ENCODE measurements at regions of chr3 and their contacts with region 1.

Region 1: DNA sequence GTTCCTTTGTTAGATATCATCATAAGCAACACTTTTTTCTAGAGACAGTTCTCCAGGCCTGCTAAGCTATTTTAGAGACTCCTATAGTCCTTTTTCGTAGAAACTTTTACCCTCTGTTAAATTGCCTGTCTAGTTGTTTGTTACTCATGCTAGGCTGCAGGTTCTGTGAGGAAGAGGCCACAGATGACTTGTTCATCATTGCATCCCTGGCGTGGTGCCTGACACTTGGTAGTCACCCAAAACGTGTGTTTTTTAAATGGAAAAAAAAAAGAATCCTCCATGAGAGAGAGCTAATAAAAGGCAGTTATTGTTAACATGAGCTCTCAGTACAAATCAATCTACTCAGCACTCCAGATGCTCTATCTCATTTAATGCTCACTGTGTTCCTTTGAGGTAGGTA is 35.1 kb downstream of the CCDC54 start:
- DNase-seq: no peak
- ATAC-seq: no peak
- H3K4me3 Mint-ChIP-seq: no peak overlapping the region
- H3K27ac Mint-ChIP-seq: no peak overlapping the region
- H3K4me1 Mint-ChIP-seq: no peaks in the 10 kb centered on the region
- H3K27me3 Mint-ChIP-seq: no peaks in the 10 kb centered on the region
- CTCF ChIP-seq: no peak

Region 2: GRCh38 chr3:107235928-107236315 is 176.5 kb before region 1 on chr3:
- CTCF ChIA-PET with region 1: interaction called, 11 read pairs
- POLR2A ChIA-PET with region 1: no interaction called
- DNase-seq: no peak
- ATAC-seq: peak; percentile 59
- H3K4me3 Mint-ChIP-seq: peak overlapping the region; percentile 1
- H3K27ac Mint-ChIP-seq: no peak overlapping the region
- H3K4me1 Mint-ChIP-seq: peaks cover 26% of the 10 kb centered on the region
- H3K27me3 Mint-ChIP-seq: peaks cover 11% of the 10 kb centered on the region
- CTCF ChIP-seq: peak; percentile 66

Region 3: DNA sequence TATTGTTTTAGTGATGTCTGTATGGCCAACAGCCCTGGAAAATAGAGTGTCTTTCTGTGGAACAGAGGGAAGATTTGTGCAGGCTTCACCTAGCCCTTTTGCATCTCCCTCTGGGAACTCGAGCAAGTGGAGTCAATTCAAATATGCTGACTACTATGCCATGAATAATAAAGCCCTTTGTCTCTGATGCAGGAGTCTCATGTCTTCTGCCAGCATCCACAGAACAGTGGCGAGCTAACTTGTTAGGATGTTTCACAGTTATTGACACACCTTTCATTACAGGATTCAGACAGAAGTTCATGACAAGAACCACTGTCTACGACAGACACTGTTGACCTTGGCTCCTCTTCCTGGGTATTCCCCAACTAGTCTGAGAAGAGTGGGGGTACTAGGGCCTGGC is 50.7 kb before region 1 on chr3:
- CTCF ChIA-PET with region 1: no interaction called
- POLR2A ChIA-PET with region 1: no interaction called
- DNase-seq: no peak
- ATAC-seq: no peak
- H3K4me3 Mint-ChIP-seq: no peak overlapping the region
- H3K27ac Mint-ChIP-seq: no peak overlapping the region
- H3K4me1 Mint-ChIP-seq: peaks cover 14% of the 10 kb centered on the region
- H3K27me3 Mint-ChIP-seq: no peaks in the 10 kb centered on the region; the same call in 1 of the 2 replicates
- CTCF ChIP-seq: no peak

Region 4: GRCh38 chr3:107401301-107401700 is 11.1 kb before region 1 on chr3:
- CTCF ChIA-PET with region 1: no interaction called
- POLR2A ChIA-PET with region 1: no interaction called
- DNase-seq: no peak
- ATAC-seq: no peak
- H3K4me3 Mint-ChIP-seq: no peak overlapping the region
- H3K27ac Mint-ChIP-seq: no peak overlapping the region
- H3K4me1 Mint-ChIP-seq: peaks cover 6% of the 10 kb centered on the region
- H3K27me3 Mint-ChIP-seq: no peaks in the 10 kb centered on the region
- CTCF ChIP-seq: no peak